MCF 10A (cell line): ENCODE measurements at regions of chr10 and their contacts with region 1.

Region 1: GRCh38 chr10:99799613-99800012 is 17.2 kb downstream of the ABCC2 start:
- DNase-seq: no peak
- H3K4me3 Mint-ChIP-seq: no peak overlapping the region
- H3K27ac Mint-ChIP-seq: no peak overlapping the region
- H3K4me1 Mint-ChIP-seq: no peaks in the 10 kb centered on the region
- H3K27me3 Mint-ChIP-seq: no peaks in the 10 kb centered on the region
- CTCF ChIP-seq: no peak

Region 2: DNA sequence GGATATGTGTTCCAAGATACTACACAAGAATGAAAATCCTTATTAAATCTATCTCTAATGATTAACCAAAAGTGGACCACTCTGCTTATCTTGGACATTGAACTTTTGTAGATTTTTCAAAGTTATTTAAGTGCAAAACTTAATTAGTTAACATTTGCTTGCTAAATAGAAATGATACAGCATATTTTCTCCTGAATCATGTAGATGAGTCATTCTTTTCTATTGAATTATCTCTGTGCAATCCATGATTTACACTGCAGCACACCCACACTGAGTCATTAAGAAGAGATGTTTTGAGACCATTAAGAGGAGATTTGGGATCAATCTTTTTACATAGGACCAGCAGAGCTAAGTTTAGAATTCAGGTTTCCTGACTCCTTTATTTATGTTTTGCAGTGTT is 23.8 kb before region 1 on chr10:
- CTCF ChIA-PET with region 1: no interaction called
- POLR2A ChIA-PET with region 1: no interaction called
- intact Hi-C with region 1: no loop called
- DNase-seq: peak; percentile 76
- H3K4me3 Mint-ChIP-seq: no peak overlapping the region
- H3K27ac Mint-ChIP-seq: peak overlapping the region; percentile 85
- H3K4me1 Mint-ChIP-seq: peaks cover 40% of the 10 kb centered on the region
- H3K27me3 Mint-ChIP-seq: no peaks in the 10 kb centered on the region
- CTCF ChIP-seq: no peak

Region 3: DNA sequence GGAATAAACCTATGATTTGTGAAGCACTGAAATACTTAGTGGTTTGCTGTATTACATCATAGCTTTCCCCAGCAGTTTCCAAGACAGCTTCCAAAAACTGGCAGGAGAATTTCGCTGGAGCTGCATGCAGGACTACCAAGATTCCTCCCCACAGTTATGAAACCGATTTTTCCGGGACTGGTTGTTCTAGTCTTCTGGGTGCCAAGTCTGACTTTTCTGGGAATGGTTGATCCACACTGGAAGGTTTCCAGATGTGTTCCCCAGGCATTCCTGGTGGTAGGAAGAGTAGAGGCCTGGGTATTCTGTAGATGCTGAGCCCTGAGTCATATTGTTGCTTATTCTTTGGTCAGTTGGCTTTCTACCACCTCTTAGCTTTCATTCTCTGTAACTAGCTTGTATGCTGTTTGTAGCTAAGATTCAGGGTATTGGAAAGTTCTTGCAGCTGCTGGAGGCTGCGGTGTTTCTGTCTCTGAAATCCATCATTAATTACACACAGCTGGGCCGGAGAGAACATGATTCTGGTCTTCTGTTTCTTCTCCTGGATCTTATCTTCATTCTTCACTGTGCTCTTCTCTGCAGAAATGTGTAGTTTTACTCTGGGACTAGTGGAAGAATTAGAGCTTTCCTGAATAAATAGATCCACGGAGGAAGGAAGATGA is 10.9 kb before region 1 on chr10:
- CTCF ChIA-PET with region 1: interaction called, 4 read pairs
- POLR2A ChIA-PET with region 1: interaction called, 14 read pairs
- intact Hi-C with region 1: no loop called
- DNase-seq: peak; percentile 98
- H3K4me3 Mint-ChIP-seq: no peak overlapping the region
- H3K27ac Mint-ChIP-seq: no peak overlapping the region
- H3K4me1 Mint-ChIP-seq: peaks cover 30% of the 10 kb centered on the region
- H3K27me3 Mint-ChIP-seq: no peaks in the 10 kb centered on the region
- CTCF ChIP-seq: no peak